ENCODE measurements at regions of chr6 and their contacts with region 1.

Region 1: DNA sequence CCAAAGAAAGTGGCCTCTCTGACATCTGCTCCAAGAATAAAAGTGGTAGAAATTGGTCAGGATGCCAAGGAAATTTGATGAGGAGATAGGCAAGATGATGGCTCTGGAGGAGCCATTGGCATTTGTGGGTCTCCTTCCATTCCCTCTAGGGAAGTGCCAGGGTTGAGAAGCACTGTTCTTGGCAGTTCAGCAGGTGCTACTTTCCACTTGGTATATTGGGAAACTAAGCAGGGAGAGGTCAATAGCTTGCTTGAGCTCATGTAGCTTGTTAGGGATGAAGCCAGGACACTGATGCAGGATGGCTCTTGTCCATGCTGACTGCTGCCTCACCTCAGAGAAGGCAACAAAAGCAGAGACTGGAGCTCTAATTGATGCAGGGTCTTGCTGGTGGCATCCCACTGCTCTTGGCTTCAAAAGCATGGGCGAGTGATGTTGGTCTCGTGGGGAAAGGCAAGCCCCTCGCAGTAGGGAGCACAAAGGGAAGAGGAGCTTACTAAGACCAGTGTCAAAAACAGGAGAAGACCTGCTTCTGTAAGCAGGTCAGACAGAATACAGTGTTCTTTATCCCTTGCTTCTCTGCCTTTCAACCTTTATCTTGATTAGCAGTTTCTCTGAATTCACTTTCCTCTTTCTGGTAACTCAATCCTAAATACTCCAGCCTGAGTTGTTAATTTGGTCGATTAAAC is 73.1 kb upstream of the RIPOR2 start:
- DNase-seq: no peak
- H3K4me3 ChIP-seq: no peak overlapping the region
- H3K27ac ChIP-seq: no peak overlapping the region
- H3K4me1 ChIP-seq: no peaks in the 10 kb centered on the region
- H3K27me3 ChIP-seq: no peaks in the 10 kb centered on the region
- CTCF ChIP-seq: no peak

Region 2: GRCh38 chr6:24980507-24981387 is 28.1 kb before region 1 on chr6:
- CTCF ChIA-PET with region 1: interaction called, 12 read pairs
- POLR2A ChIA-PET with region 1: no interaction called
- intact Hi-C with region 1: no loop called
- DNase-seq: peak; percentile 71
- H3K4me3 ChIP-seq: no peak overlapping the region
- H3K27ac ChIP-seq: peak overlapping the region; percentile 60
- H3K4me1 ChIP-seq: peaks cover 22% of the 10 kb centered on the region
- H3K27me3 ChIP-seq: no peaks in the 10 kb centered on the region
- CTCF ChIP-seq: no peak

Region 3: DNA sequence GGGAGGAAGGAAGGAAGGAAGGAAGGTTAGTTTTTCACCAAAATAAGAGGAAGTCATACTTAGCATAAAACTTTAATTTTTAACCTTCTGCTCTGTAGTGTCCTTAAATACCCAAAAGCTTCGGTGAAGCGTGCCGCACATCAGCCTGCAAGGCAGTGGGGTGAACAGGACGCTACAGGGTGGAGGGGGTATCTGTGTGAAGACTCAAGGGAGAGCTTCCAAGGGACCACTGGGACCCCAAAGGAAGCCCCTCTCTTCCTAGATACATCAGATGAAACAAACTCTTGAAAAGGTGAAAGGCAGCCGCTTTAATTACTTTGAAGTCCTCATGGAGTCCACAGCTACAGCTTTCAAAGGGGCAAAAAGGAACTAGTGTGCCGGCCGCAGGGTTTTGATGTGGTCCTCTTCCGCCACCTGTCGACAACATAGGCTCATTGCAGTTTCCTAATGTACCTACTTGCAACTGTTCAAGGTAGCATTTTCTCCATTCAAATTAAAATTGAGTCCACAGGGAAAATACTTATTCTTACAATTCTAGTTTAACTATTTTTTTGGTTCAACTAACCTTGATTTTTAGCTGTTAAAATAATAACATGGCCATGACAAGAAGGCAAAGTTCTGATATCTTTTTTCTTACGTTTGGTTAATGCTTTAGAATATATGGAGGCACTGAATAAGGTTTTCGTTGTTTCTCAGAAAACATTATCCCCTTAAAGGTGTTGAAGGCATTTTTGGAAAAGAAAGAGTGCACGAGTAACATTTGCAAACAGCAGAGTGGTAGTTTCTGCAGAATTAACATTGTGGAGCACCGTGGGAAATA is 61.9 kb after region 1 on chr6:
- CTCF ChIA-PET with region 1: no interaction called
- POLR2A ChIA-PET with region 1: no interaction called
- intact Hi-C with region 1: no loop called
- DNase-seq: peak; percentile 88
- H3K4me3 ChIP-seq: no peak overlapping the region
- H3K27ac ChIP-seq: no peak overlapping the region
- H3K4me1 ChIP-seq: no peaks in the 10 kb centered on the region
- H3K27me3 ChIP-seq: no peaks in the 10 kb centered on the region
- CTCF ChIP-seq: peak; percentile 89